K562 (cell line): ENCODE measurements at regions of chr18 and their contacts with region 1.

Region 1: DNA sequence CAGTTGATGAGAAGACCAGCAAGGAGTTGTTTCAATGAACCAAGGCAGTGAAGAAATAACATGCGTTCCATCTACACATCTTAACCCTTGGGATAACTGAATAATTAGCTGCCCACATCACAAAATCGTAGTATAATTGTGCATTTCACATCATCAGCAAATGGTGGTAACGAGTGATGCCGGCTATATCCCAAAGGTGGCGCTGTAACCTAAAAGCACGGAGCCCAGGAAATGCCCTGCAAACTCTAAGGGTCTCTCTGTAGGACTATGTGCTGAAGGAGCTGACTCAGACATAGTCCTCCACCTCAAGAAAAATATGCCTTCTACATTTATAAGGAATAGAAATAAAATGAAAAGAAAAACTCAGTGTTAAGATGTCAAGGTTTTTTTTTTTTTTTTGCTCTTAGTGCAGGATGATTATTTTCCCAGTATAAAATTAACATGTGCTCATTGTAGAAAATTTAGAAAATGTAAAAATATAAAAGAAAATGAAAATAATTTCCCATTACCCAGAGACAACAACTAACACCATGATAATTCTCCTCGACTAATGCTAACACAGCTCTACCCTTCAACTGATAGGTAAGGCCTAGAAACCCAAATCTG is 23.1 kb upstream of the DSG3 start:
- DNase-seq: peak; percentile 23 to 69 (median 34)
- ATAC-seq: peak; percentile 92
- H3K4me3 ChIP-seq: no peak overlapping the region
- H3K27ac ChIP-seq: no peak overlapping the region
- H3K4me1 ChIP-seq: 0 out of 5 replicates have a peak, but pooled peaks cover 0 to 5% of the 10 kb centered on the region in 2 experiments
- H3K27me3 ChIP-seq: no peaks in the 10 kb centered on the region
- CTCF ChIP-seq: peak; percentile 81 to 91 (median 86)
- EP300 ChIP-seq: no peak
- POLR2A ChIP-seq: no peak
- RAD21 ChIP-seq: peak; percentile 82 to 89

Region 2: GRCh38 chr18:30971338-30971956 is 453.0 kb before region 1 on chr18:
- CTCF ChIA-PET with region 1: no interaction called
- POLR2A ChIA-PET with region 1: no interaction called
- in situ Hi-C with region 1: no loop called
- intact Hi-C with region 1: loop called (anchors 5 kb)
- DNase-seq: peak; percentile 12 to 56 (median 18)
- ATAC-seq: peak; percentile 83
- H3K4me3 ChIP-seq: no peak overlapping the region
- H3K27ac ChIP-seq: no peak overlapping the region
- H3K4me1 ChIP-seq: no peaks in the 10 kb centered on the region
- H3K27me3 ChIP-seq: no peaks in the 10 kb centered on the region
- CTCF ChIP-seq: peak in 2 of 3 experiments; percentile 50 to 62; a peak in 4 of 6 replicates
- EP300 ChIP-seq: no peak
- POLR2A ChIP-seq: no peak
- RAD21 ChIP-seq: peak; percentile 70 to 73

Region 3: GRCh38 chr18:31506024-31506742 is 81.7 kb after region 1 on chr18:
- CTCF ChIA-PET with region 1: no interaction called
- POLR2A ChIA-PET with region 1: no interaction called
- in situ Hi-C with region 1: no loop called
- intact Hi-C with region 1: loop called (anchors 5 kb)
- DNase-seq: no peak
- ATAC-seq: no peak
- H3K4me3 ChIP-seq: no peak overlapping the region
- H3K27ac ChIP-seq: no peak overlapping the region
- H3K4me1 ChIP-seq: peaks cover 0 to 18% of the 10 kb centered on the region in 2 experiments; a peak in 4 of 5 replicates
- H3K27me3 ChIP-seq: no peaks in the 10 kb centered on the region
- CTCF ChIP-seq: peak in 2 of 3 experiments; percentile 17 to 31; a peak in 2 of 6 replicates
- EP300 ChIP-seq: no peak
- POLR2A ChIP-seq: no peak
- RAD21 ChIP-seq: peak in 1 of 2 experiments; percentile 38; a peak in 2 of 4 replicates

Region 4: DNA sequence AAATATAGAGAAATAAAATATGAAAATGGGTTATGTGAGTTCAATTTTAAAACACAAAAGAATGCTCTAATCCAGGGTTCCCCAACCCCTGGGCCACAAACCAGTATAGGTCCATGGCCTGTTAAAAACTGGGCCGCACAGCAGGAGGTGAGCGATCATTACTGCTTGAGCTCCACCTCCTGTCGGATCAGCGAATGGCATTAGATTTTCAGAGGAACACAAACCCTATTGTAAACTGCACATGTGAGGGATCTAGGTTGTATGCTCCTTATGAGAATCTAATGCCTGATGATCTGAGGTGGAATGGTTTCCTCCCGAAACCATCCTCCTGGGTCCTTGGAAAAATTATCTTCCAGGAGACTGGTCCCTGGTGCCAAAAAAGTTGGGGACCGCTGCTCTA is 201.9 kb after region 1 on chr18:
- CTCF ChIA-PET with region 1: no interaction called
- POLR2A ChIA-PET with region 1: no interaction called
- in situ Hi-C with region 1: no loop called
- intact Hi-C with region 1: loop called (anchors 5 kb)
- DNase-seq: peak in 1 of 4 experiments; percentile 52
- ATAC-seq: peak; percentile 88
- H3K4me3 ChIP-seq: no peak overlapping the region
- H3K27ac ChIP-seq: no peak overlapping the region
- H3K4me1 ChIP-seq: no peaks in the 10 kb centered on the region; a peak in 1 of 5 replicates
- H3K27me3 ChIP-seq: no peaks in the 10 kb centered on the region
- CTCF ChIP-seq: peak; percentile 49 to 53 (median 52); a peak in 5 of 6 replicates
- EP300 ChIP-seq: no peak
- POLR2A ChIP-seq: no peak
- RAD21 ChIP-seq: peak; percentile 31 to 75; a peak in 2 of 4 replicates

Region 5: DNA sequence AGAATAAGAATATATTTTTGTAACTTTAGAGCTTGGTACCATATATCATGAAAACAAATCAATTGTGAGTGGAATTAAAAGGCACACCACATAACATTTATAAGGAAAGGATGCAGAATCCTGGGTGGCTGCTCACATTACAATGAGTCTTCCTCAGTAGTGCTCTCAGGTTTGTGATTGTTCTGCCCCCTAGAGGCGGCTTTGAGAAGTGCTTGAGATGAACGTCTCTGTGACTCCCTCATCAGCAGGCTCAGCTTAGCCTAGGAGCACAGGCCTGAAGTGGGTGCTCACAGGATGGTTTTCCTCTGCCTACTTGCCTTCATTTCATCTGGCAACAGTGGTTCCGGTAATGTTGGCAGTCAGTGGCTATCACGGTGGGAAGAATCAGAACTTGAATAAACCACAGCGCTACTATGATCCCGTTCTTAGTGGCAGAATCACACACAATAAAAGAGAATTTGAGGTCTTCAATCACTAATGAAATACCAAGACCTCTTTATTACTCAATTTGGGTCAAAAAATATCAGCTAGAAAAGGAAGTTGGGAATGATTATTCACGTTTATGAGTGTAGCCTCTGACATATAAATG is 298.0 kb after region 1 on chr18:
- CTCF ChIA-PET with region 1: interaction called, 3 read pairs
- POLR2A ChIA-PET with region 1: no interaction called
- in situ Hi-C with region 1: no loop called
- intact Hi-C with region 1: loop called (anchors 5 kb)
- DNase-seq: peak; percentile 75 to 87 (median 80)
- ATAC-seq: peak; percentile 98
- H3K4me3 ChIP-seq: no peak overlapping the region
- H3K27ac ChIP-seq: no peak overlapping the region
- H3K4me1 ChIP-seq: peaks cover 0 to 6% of the 10 kb centered on the region in 2 experiments; a peak in 1 of 5 replicates
- H3K27me3 ChIP-seq: peaks cover 9 to 22% of the 10 kb centered on the region in 2 experiments; a peak in 4 of 5 replicates
- CTCF ChIP-seq: peak; percentile 79 to 91 (median 84)
- EP300 ChIP-seq: no peak
- POLR2A ChIP-seq: no peak
- RAD21 ChIP-seq: peak; percentile 79 to 90

Region 6: GRCh38 chr18:31819106-31819924 is 394.8 kb after region 1 on chr18:
- CTCF ChIA-PET with region 1: no interaction called
- POLR2A ChIA-PET with region 1: no interaction called
- in situ Hi-C with region 1: no loop called
- intact Hi-C with region 1: loop called (anchors 5 kb)
- DNase-seq: peak; percentile 15 to 73 (median 20)
- ATAC-seq: peak; percentile 86
- H3K4me3 ChIP-seq: no peak overlapping the region
- H3K27ac ChIP-seq: no peak overlapping the region
- H3K4me1 ChIP-seq: peaks cover 0 to 5% of the 10 kb centered on the region in 2 experiments; a peak in 3 of 5 replicates
- H3K27me3 ChIP-seq: no peaks in the 10 kb centered on the region
- CTCF ChIP-seq: peak; percentile 59 to 84 (median 72); a peak in 5 of 6 replicates
- EP300 ChIP-seq: no peak
- POLR2A ChIP-seq: no peak
- RAD21 ChIP-seq: peak; percentile 67 to 95

Region 7: DNA sequence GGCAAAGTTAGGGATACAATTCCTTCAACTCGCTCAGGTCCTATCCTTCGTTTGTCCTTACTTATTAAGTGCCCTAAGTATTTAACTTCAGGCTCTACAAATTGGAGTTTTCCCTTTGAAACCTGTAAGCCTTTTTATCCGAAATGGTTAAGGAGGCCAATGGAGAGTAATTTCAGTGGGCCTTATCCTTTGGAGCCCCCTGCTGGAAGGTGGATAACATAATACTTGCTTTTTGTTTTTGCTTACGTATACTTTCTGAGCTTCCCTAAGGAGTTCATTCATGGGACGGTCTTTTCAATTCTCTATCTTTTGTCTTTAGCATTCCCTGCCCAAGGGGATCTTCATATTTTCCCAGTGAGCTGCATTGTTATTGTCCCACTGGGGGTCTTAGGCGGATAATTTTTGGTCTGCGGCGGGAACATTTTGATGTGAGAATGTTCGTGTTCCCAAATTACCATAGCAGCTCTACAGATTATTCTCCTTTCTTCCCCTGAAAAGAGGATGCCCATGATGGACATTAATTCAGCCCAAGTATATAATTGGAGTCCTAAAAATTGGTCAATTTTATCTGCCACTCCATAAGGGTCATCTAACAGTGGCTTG is 552.9 kb after region 1 on chr18:
- CTCF ChIA-PET with region 1: no interaction called
- POLR2A ChIA-PET with region 1: no interaction called
- in situ Hi-C with region 1: no loop called
- intact Hi-C with region 1: loop called (anchors 5 kb)
- DNase-seq: peak; percentile 60 to 76 (median 61)
- ATAC-seq: peak; percentile 95
- H3K4me3 ChIP-seq: no peak overlapping the region
- H3K27ac ChIP-seq: no peak overlapping the region
- H3K4me1 ChIP-seq: no peaks in the 10 kb centered on the region
- H3K27me3 ChIP-seq: peaks cover 0 to 4% of the 10 kb centered on the region in 2 experiments; a peak in 1 of 5 replicates
- CTCF ChIP-seq: peak; percentile 63 to 93 (median 77); a peak in 5 of 6 replicates
- EP300 ChIP-seq: no peak
- POLR2A ChIP-seq: no peak
- RAD21 ChIP-seq: peak; percentile 80 to 94